ENCODE measurements at regions of chr3 and their contacts with region 1.

Region 1: DNA sequence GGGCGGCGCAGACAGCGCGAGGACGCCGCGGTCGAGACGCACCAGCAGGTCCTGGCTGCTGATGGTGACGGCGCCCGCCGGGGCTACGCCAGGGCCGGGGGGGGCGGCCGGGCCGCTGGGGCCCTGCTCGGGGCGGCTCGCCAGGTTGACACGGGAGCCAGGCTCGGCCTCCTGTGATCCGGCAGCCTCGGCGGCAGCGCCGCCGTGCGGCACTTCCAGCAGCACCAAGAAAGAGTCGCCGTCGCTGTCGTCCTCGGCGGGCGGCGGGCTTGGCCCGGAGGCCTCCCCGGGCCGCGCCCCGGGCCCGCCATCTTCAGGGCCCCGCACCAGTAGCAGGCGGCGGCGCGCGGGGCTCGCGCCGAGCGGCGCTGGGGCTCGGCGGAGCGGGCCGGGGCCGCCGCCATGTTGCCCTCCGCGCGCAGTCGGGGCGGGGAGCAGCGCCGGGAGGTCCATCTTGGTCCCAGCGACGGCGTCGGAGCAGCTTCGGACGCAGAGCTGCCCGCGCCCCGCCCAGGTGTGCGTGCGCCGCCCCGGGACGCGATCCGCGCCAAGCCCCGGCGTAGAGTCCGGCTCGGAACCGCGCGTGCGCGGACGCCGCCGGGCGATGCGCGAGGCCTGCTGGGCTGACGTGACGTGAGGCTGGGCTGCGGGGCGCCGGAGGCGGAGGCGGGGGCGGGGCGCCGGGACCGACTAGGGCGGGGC is at the start of gene ZXDC:
- DNase-seq: peak; percentile 85 to 97 (median 92)
- ATAC-seq: peak; percentile 81
- H3K4me3 ChIP-seq: peak within 1 kb of the TSS; percentile 68 to 72
- H3K4me3 Mint-ChIP-seq: peak within 1 kb of the TSS; percentile 88
- H3K27ac ChIP-seq: peak within 1 kb of the TSS; percentile 72 to 84
- H3K27ac Mint-ChIP-seq: peak within 1 kb of the TSS; percentile 89
- H3K4me1 ChIP-seq: peaks cover 37% of the 10 kb centered on the region
- H3K4me1 Mint-ChIP-seq: peaks cover 46% of the 10 kb centered on the region
- H3K27me3 ChIP-seq: no peaks in the 10 kb centered on the region
- H3K27me3 Mint-ChIP-seq: no peaks in the 10 kb centered on the region
- CTCF ChIP-seq: peak; percentile 25
- total RNA-seq, gene ZXDC: 60.7 to 62.8 TPM

Region 2: GRCh38 chr3:125519678-125520589 is 955.6 kb before region 1 on chr3 and contains the start of gene SNX4:
- CTCF ChIA-PET with region 1: no interaction called
- POLR2A ChIA-PET with region 1: no interaction called
- intact Hi-C with region 1: loop called in 1 of 2 experiments (anchors 5 kb)
- DNase-seq: peak; percentile 73 to 91 (median 86)
- ATAC-seq: peak; percentile 96
- H3K4me3 ChIP-seq: peak within 1 kb of the TSS; percentile 66 to 77
- H3K4me3 Mint-ChIP-seq: peak within 1 kb of the TSS; percentile 97
- H3K27ac ChIP-seq: peak within 1 kb of the TSS; percentile 60 to 61
- H3K27ac Mint-ChIP-seq: peak within 1 kb of the TSS; percentile 95
- H3K4me1 ChIP-seq: peaks cover 12% of the 10 kb centered on the region
- H3K4me1 Mint-ChIP-seq: peaks cover 46% of the 10 kb centered on the region
- H3K27me3 ChIP-seq: no peaks in the 10 kb centered on the region
- H3K27me3 Mint-ChIP-seq: no peaks in the 10 kb centered on the region
- CTCF ChIP-seq: no peak
- total RNA-seq, gene SNX4: 26.4 to 29.7 TPM

Region 3: GRCh38 chr3:126083913-126084767 is 391.4 kb before region 1 on chr3 and contains the start of gene SLC41A3:
- CTCF ChIA-PET with region 1: no interaction called
- POLR2A ChIA-PET with region 1: no interaction called
- intact Hi-C with region 1: loop called (anchors 1 to 2 kb)
- DNase-seq: peak; percentile 51 to 91 (median 82)
- ATAC-seq: peak; percentile 86
- H3K4me3 ChIP-seq: peak within 1 kb of the TSS; percentile 58 to 71
- H3K4me3 Mint-ChIP-seq: peak within 1 kb of the TSS; percentile 84
- H3K27ac ChIP-seq: peak within 1 kb of the TSS; percentile 71 to 80
- H3K27ac Mint-ChIP-seq: peak within 1 kb of the TSS; percentile 81
- H3K4me1 ChIP-seq: peaks cover 11% of the 10 kb centered on the region
- H3K4me1 Mint-ChIP-seq: peaks cover 26% of the 10 kb centered on the region
- H3K27me3 ChIP-seq: no peaks in the 10 kb centered on the region
- H3K27me3 Mint-ChIP-seq: no peaks in the 10 kb centered on the region
- CTCF ChIP-seq: peak; percentile 54
- total RNA-seq, gene SLC41A3: 24.0 to 26.1 TPM

Region 4: GRCh38 chr3:126442094-126442855 is 33.3 kb before region 1 on chr3:
- CTCF ChIA-PET with region 1: no interaction called
- POLR2A ChIA-PET with region 1: no interaction called
- intact Hi-C with region 1: no loop called
- DNase-seq: no peak
- ATAC-seq: no peak
- H3K4me3 ChIP-seq: no peak overlapping the region
- H3K4me3 Mint-ChIP-seq: no peak overlapping the region
- H3K27ac ChIP-seq: no peak overlapping the region
- H3K27ac Mint-ChIP-seq: no peak overlapping the region
- H3K4me1 ChIP-seq: no peaks in the 10 kb centered on the region
- H3K4me1 Mint-ChIP-seq: no peaks in the 10 kb centered on the region
- H3K27me3 ChIP-seq: no peaks in the 10 kb centered on the region
- H3K27me3 Mint-ChIP-seq: no peaks in the 10 kb centered on the region
- CTCF ChIP-seq: no peak

Region 5: GRCh38 chr3:126703512-126704462 is 228.2 kb after region 1 on chr3 and contains the start of gene CHCHD6:
- CTCF ChIA-PET with region 1: no interaction called
- POLR2A ChIA-PET with region 1: no interaction called
- intact Hi-C with region 1: loop called in 1 of 2 experiments (anchors 1 kb)
- DNase-seq: peak; percentile 92 to 99 (median 96)
- ATAC-seq: peak; percentile 93
- H3K4me3 ChIP-seq: peak within 1 kb of the TSS; percentile 74 to 75
- H3K4me3 Mint-ChIP-seq: peak within 1 kb of the TSS; percentile 98
- H3K27ac ChIP-seq: peak within 1 kb of the TSS in 1 of 2 experiments; percentile 36
- H3K27ac Mint-ChIP-seq: peak within 1 kb of the TSS; percentile 88
- H3K4me1 ChIP-seq: peaks cover 17% of the 10 kb centered on the region
- H3K4me1 Mint-ChIP-seq: peaks cover 22% of the 10 kb centered on the region
- H3K27me3 ChIP-seq: no peaks in the 10 kb centered on the region
- H3K27me3 Mint-ChIP-seq: peaks cover 15% of the 10 kb centered on the region
- CTCF ChIP-seq: no peak
- total RNA-seq, gene CHCHD6: 6.2 to 6.4 TPM

Region 6: DNA sequence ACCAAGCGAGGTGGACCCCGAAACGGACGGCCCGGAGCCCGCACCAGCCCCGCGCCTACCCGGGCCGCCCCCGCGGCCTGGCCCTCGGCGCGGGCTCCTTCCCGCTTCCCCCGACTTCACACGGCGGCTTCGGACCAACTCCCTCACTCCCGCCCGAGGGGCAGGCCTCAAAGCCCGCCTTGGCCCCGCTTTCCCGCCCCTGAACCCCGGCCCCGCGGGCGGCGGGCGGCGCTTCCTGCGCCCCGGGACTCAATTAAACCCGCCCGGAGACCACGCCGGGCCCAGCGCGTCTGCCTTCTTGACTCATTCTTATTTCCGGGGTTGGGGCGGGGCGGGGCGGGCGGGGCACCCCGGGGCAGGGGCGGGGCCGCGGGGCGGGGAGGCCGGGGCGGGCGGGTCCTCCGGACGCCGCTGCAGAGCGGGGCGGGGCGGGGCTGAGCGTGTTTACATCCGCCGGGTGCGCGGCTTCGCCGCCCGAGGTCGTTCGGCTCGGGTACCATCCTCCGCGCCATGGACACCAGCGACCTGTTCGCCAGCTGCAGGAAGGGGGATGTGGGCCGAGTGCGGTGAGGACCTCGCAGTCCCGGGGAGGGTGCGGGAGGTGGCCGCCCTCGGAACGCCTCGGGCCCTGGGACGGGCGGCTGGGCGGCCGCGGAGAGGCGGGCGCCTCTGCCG is 1197.1 kb after region 1 on chr3 and contains the start of gene ABTB1:
- CTCF ChIA-PET with region 1: no interaction called
- POLR2A ChIA-PET with region 1: no interaction called
- intact Hi-C with region 1: loop called (anchors 5 to 10 kb)
- DNase-seq: peak; percentile 74 to 92 (median 87)
- ATAC-seq: peak; percentile 83
- H3K4me3 ChIP-seq: peak within 1 kb of the TSS; percentile 71 to 87
- H3K4me3 Mint-ChIP-seq: peak within 1 kb of the TSS; percentile 93
- H3K27ac ChIP-seq: peak within 1 kb of the TSS; percentile 80 to 92
- H3K27ac Mint-ChIP-seq: peak within 1 kb of the TSS; percentile 99
- H3K4me1 ChIP-seq: peaks cover 31% of the 10 kb centered on the region
- H3K4me1 Mint-ChIP-seq: peaks cover 31% of the 10 kb centered on the region
- H3K27me3 ChIP-seq: no peaks in the 10 kb centered on the region
- H3K27me3 Mint-ChIP-seq: no peaks in the 10 kb centered on the region
- CTCF ChIP-seq: no peak
- total RNA-seq, gene ABTB1: 86.0 to 88.1 TPM

Measured in CD8-positive, alpha-beta T cell (primary cell).